Spleen (tissue), 13 donors: ENCODE measurements at regions of chr10 and their contacts with region 1.

Region 1: DNA sequence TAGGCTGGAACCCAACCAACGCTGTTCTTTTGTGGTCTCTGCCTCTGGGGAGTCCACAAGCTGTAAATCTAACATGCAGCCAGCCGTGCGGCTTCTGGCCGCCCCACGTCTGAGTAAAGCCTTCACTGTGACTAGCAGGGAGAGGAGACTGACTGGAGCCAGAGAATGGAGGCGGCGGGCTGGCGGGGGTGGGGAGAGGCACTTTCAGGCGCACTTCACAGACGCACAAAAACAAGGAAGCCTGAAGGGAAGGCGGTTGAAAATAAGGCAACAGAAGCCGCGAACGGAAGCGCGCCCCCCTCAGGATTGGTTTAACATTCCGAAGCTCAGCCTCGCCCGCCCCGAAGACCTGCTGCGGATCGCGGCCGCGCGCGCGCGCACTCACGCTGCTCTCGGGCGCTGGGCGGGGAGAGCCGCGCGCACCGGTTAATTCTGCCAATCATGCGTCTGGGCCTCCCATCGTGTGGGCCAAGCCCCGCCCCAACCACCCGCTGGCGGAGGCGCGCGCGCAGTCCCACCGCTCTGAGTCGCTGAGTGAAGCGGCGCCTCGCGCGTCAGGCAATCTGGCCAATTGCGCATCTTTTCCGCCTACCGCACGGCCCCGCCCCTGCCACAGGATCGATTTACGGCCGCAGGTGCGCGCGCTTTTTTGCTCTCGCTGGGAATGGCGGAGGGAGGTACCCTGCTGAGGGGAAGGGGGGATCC is at the start of gene SFR1:
- DNase-seq: peak; percentile 100
- H3K4me3 ChIP-seq: peak within 1 kb of the TSS; percentile 66 to 81 (median 72)
- H3K27ac ChIP-seq: peak within 1 kb of the TSS; percentile 96 to 100 (median 98)
- H3K4me1 ChIP-seq: peaks cover 6 to 31% (median 20%) of the 10 kb centered on the region in 6 donors
- H3K27me3 ChIP-seq: no peaks in the 10 kb centered on the region
- CTCF ChIP-seq: peak; percentile 27 to 85 (median 77)
- POLR2A ChIP-seq: peak; percentile 30 to 89 (median 58)
- total RNA-seq, gene SFR1: 7.5 to 13.2 (median 9.1) TPM

Region 2: GRCh38 chr10:103918053-103918846 is 203.4 kb before region 1 on chr10 and contains the start of gene STN1:
- intact Hi-C with region 1: loop called (anchors 10 kb)
- DNase-seq: peak; percentile 100
- H3K4me3 ChIP-seq: peak within 1 kb of the TSS; percentile 53 to 92 (median 70)
- H3K27ac ChIP-seq: peak within 1 kb of the TSS; percentile 94 to 98 (median 95)
- H3K4me1 ChIP-seq: peaks cover 24 to 52% (median 43%) of the 10 kb centered on the region in 6 donors
- H3K27me3 ChIP-seq: no peaks in the 10 kb centered on the region
- CTCF ChIP-seq: peak in 4 of 11 experiments; percentile 10 to 51 (median 28)
- POLR2A ChIP-seq: peak; percentile 84 to 97 (median 84)
- total RNA-seq, gene STN1: 18.6 to 27.7 (median 24.1) TPM

Region 3: GRCh38 chr10:103966671-103967447 is 154.8 kb before region 1 on chr10 and contains the start of gene SLK:
- intact Hi-C with region 1: loop called (anchors 10 kb)
- DNase-seq: peak; percentile 96
- H3K4me3 ChIP-seq: peak within 1 kb of the TSS; percentile 71 to 94 (median 78)
- H3K27ac ChIP-seq: peak within 1 kb of the TSS; percentile 90 to 99 (median 98)
- H3K4me1 ChIP-seq: peaks cover 23 to 55% (median 44%) of the 10 kb centered on the region in 6 donors
- H3K27me3 ChIP-seq: no peaks in the 10 kb centered on the region
- CTCF ChIP-seq: no peak
- POLR2A ChIP-seq: peak in 2 of 3 donors; percentile 85 to 86
- total RNA-seq, gene SLK: 28.9 to 47.4 (median 39.0) TPM

Region 4: GRCh38 chr10:104067525-104067924 is 54.1 kb before region 1 on chr10:
- intact Hi-C with region 1: no loop called
- DNase-seq: no peak
- H3K4me3 ChIP-seq: no peak overlapping the region
- H3K27ac ChIP-seq: no peak overlapping the region
- H3K4me1 ChIP-seq: no peaks in the 10 kb centered on the region
- H3K27me3 ChIP-seq: no peaks in the 10 kb centered on the region
- CTCF ChIP-seq: no peak
- POLR2A ChIP-seq: no peak

Region 5: GRCh38 chr10:104146882-104147281 is 25.2 kb after region 1 on chr10:
- intact Hi-C with region 1: no loop called
- DNase-seq: no peak
- H3K4me3 ChIP-seq: no peak overlapping the region
- H3K27ac ChIP-seq: no peak overlapping the region
- H3K4me1 ChIP-seq: no peaks in the 10 kb centered on the region
- H3K27me3 ChIP-seq: peaks cover 0 to 5% (median 0%) of the 10 kb centered on the region in 7 donors
- CTCF ChIP-seq: no peak
- POLR2A ChIP-seq: no peak